HAP-1 (cell line): ENCODE measurements at regions of chr3 and their contacts with region 1.

Region 1: GRCh38 chr3:13452490-13453335 is 27.4 kb upstream of the HDAC11 start:
- DNase-seq: peak; percentile 61 to 75
- H3K4me3 ChIP-seq: peak overlapping the region; percentile 35; the same call in 1 of the 2 replicates
- H3K4me1 ChIP-seq: peaks cover 23% of the 10 kb centered on the region
- H3K27me3 ChIP-seq: no peaks in the 10 kb centered on the region

Region 2: DNA sequence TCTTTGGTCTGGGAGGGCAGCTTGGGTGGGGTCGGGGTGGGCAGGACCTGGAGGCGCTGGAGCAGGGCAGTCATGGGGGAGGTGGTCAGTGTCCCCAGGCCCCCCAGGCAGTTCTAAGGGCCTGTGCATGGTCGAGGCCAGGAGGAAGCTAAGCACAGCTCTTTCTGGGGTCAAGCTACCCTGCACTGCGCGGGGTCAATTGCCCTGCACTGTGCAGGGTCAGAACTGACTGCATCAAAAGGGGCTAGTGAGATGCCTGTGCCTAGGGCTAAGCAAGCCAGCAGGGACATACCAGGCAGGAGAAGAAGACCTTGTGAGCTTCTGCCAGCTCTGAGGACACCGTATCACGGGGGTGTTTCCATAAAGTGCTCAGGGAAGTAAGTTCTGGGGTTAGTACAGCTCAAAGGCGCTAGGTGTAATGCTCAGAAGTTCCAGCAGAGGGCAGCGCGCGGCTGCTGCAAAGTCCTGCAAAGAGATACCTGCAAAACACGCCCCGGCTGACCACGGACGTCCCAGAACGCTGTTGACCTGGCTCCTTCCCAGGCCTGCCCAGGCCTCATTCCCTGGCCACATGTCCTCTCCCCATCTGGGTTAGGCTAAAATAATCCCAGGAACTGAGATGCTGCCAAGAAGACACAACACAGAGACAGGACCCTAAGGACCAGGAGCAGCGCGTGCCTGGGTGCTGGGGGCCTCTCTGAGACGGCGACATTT is 360.7 kb before region 1 on chr3:
- in situ Hi-C with region 1: loop called (anchors 25 kb)
- DNase-seq: peak; percentile 49 to 89
- H3K4me3 ChIP-seq: no peak overlapping the region
- H3K4me1 ChIP-seq: no peaks in the 10 kb centered on the region
- H3K27me3 ChIP-seq: no peaks in the 10 kb centered on the region